PC-9 (cell line): ENCODE measurements at regions of chr2 and their contacts with region 1.

Region 1: GRCh38 chr2:196171248-196171871 is at the start of gene STK17B:
- DNase-seq: peak; percentile 79 to 85
- H3K4me3 ChIP-seq: peak within 1 kb of the TSS; percentile 95
- H3K27ac ChIP-seq: peak within 1 kb of the TSS; percentile 77
- H3K4me1 ChIP-seq: peaks cover 40% of the 10 kb centered on the region
- H3K27me3 ChIP-seq: no peaks in the 10 kb centered on the region
- CTCF ChIP-seq: no peak
- total RNA-seq, gene STK17B: 10.8 and 14.9 TPM in 2 replicates

Region 2: DNA sequence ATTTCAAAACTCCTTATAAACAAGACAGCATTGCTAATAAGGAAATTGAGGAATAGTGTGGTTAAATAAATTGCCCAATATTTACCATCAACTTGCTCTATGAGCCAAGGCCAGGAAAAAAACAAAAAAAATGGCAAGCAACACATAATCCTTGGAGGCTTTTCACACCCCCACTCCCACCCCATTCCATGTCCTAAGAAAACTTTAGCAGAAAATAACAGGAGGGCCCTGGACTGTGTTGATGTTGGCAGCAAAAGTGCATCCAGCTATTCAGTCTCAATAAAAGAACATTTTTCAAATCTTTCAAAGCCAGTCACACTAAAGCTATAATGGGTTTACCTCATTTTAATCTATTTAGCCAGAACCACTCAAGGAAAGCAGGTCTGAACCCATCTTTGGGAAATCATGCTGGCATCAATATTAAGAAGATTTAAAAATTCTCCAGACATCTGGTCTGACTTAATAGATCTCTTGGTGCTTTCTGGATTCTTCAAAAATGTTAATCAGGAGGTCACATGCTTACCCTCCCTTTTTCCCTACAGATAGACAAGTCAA is 34.6 kb after region 1 on chr2:
- CTCF ChIA-PET with region 1: no interaction called
- POLR2A ChIA-PET with region 1: no interaction called
- intact Hi-C with region 1: loop called (anchors 5 kb)
- DNase-seq: no peak
- H3K4me3 ChIP-seq: no peak overlapping the region
- H3K27ac ChIP-seq: no peak overlapping the region
- H3K4me1 ChIP-seq: peaks cover 40% of the 10 kb centered on the region
- H3K27me3 ChIP-seq: no peaks in the 10 kb centered on the region
- CTCF ChIP-seq: no peak

Region 3: GRCh38 chr2:196233021-196233804 is 61.9 kb after region 1 on chr2:
- CTCF ChIA-PET with region 1: no interaction called
- POLR2A ChIA-PET with region 1: interaction called, 3 read pairs
- intact Hi-C with region 1: loop called (anchors 1 kb)
- DNase-seq: peak; percentile 51 to 90
- H3K4me3 ChIP-seq: peak overlapping the region; percentile 23; the same call in 1 of the 2 replicates
- H3K27ac ChIP-seq: peak overlapping the region; percentile 92
- H3K4me1 ChIP-seq: peaks cover 37% of the 10 kb centered on the region
- H3K27me3 ChIP-seq: no peaks in the 10 kb centered on the region
- CTCF ChIP-seq: no peak

Region 4: GRCh38 chr2:196277002-196277401 is 105.6 kb after region 1 on chr2:
- CTCF ChIA-PET with region 1: no interaction called
- POLR2A ChIA-PET with region 1: interaction called, 10 read pairs
- intact Hi-C with region 1: loop called (anchors 5 kb)
- DNase-seq: no peak
- H3K4me3 ChIP-seq: no peak overlapping the region
- H3K27ac ChIP-seq: no peak overlapping the region
- H3K4me1 ChIP-seq: peaks cover 9% of the 10 kb centered on the region; the same call in 1 of the 2 replicates
- H3K27me3 ChIP-seq: no peaks in the 10 kb centered on the region
- CTCF ChIP-seq: peak; percentile 68